ENCODE measurements at regions of chr1 and their contacts with region 1.

Region 1: DNA sequence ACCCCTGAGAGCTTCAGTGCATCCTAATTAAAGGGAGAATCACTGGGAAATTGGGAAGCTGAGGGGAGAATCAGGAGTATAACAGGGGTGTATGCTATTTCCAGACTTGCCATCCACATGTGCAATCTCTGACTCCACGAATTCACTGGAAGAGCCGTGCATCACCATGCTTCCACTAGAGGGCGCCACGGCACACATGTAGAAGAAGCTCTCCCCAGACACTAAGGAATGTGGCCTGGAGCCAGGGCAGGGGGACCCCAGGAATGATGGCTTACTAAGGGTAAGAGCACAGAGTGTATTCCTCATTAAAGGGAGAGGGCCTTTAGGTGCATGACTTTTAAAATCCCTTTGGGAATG is 81.5 kb downstream of the ABCA4 start:
- DNase-seq: peak in 7 of 9 donors; percentile 10 to 57 (median 29)
- ATAC-seq: peak; percentile 37
- H3K4me3 ChIP-seq: no peak overlapping the region
- H3K4me3 Mint-ChIP-seq: no peak overlapping the region
- H3K27ac ChIP-seq: no peak overlapping the region
- H3K27ac Mint-ChIP-seq: peak overlapping the region in 1 of 9 donors; percentile 1
- H3K4me1 ChIP-seq: no peaks in the 10 kb centered on the region
- H3K4me1 Mint-ChIP-seq: peaks cover 0 to 14% (median 0%) of the 10 kb centered on the region in 7 donors
- H3K27me3 ChIP-seq: no peaks in the 10 kb centered on the region
- H3K27me3 Mint-ChIP-seq: peaks cover 20 to 49% (median 30%) of the 10 kb centered on the region in 5 donors

Region 2: GRCh38 chr1:94025383-94026340 is 13.8 kb before region 1 on chr1:
- CTCF ChIA-PET with region 1: interaction called, 14 read pairs
- POLR2A ChIA-PET with region 1: no interaction called
- intact Hi-C with region 1: no loop called
- DNase-seq: peak in 5 of 9 donors; percentile 5 to 19 (median 11)
- ATAC-seq: no peak
- H3K4me3 ChIP-seq: no peak overlapping the region
- H3K4me3 Mint-ChIP-seq: no peak overlapping the region
- H3K27ac ChIP-seq: no peak overlapping the region
- H3K27ac Mint-ChIP-seq: no peak overlapping the region
- H3K4me1 ChIP-seq: no peaks in the 10 kb centered on the region
- H3K4me1 Mint-ChIP-seq: peaks cover 0 to 12% (median 0%) of the 10 kb centered on the region in 7 donors
- H3K27me3 ChIP-seq: peaks cover 0 to 4% of the 10 kb centered on the region in 2 donors
- H3K27me3 Mint-ChIP-seq: peaks cover 6 to 8% (median 7%) of the 10 kb centered on the region in 5 donors

Region 3: DNA sequence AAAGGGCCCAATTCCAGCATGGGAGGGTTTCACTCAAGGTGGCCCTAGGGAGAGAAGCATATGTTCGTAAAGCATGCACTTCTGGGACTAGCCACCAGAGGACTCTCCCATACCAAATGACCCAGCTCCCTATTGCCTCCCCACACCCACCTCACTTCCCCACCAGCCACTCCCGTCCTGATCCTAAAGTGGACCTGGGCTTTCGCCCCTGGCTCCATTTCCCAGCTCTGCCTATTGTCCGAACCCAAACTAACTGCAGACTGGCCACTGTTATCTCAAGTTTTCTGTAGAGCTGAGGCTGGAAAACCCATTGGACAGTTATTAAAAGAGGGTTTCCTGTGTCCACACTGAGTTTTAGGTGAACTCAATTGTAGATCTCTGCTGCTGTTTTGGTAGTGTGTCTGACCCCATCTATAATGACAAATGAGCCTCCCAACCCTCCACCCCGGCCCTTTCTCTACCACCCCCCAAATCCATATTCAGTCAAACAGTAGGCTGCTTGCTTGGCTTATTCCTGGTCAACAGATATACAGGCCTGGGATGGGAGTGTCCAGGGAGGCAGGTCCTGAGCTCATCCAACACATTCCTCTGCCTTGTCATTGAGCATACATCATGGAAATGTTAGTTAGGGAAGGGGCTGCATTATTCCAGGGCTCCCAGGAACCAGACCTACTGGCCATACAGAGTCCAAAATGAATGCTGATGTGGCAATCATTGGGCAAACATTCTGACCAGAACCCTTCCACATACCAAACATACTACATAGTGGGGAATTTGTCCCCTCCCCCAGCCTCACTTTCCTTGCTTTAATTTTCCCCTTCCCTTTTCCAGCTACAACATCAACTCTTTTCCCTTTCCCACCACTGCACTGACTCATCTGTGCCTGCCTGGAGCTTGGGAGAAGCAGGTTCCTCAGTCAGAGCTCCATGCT is 22.3 kb after region 1 on chr1:
- CTCF ChIA-PET with region 1: no interaction called
- POLR2A ChIA-PET with region 1: no interaction called
- intact Hi-C with region 1: no loop called
- DNase-seq: peak in 5 of 9 donors; percentile 11 to 31 (median 17)
- ATAC-seq: peak; percentile 78
- H3K4me3 ChIP-seq: no peak overlapping the region
- H3K4me3 Mint-ChIP-seq: no peak overlapping the region
- H3K27ac ChIP-seq: no peak overlapping the region
- H3K27ac Mint-ChIP-seq: no peak overlapping the region
- H3K4me1 ChIP-seq: no peaks in the 10 kb centered on the region
- H3K4me1 Mint-ChIP-seq: peaks cover 0 to 2% (median 0%) of the 10 kb centered on the region in 7 donors
- H3K27me3 ChIP-seq: no peaks in the 10 kb centered on the region
- H3K27me3 Mint-ChIP-seq: peaks cover 7 to 25% (median 14%) of the 10 kb centered on the region in 5 donors

Region 4: GRCh38 chr1:94316836-94317789 is 277.6 kb after region 1 on chr1:
- CTCF ChIA-PET with region 1: no interaction called
- POLR2A ChIA-PET with region 1: no interaction called
- intact Hi-C with region 1: no loop called
- DNase-seq: no peak
- ATAC-seq: no peak
- H3K4me3 ChIP-seq: no peak overlapping the region
- H3K4me3 Mint-ChIP-seq: no peak overlapping the region
- H3K27ac ChIP-seq: no peak overlapping the region
- H3K27ac Mint-ChIP-seq: no peak overlapping the region
- H3K4me1 ChIP-seq: no peaks in the 10 kb centered on the region
- H3K4me1 Mint-ChIP-seq: no peaks in the 10 kb centered on the region
- H3K27me3 ChIP-seq: no peaks in the 10 kb centered on the region
- H3K27me3 Mint-ChIP-seq: peaks cover 1 to 17% (median 11%) of the 10 kb centered on the region in 5 donors

Measured in naive thymus-derived CD4-positive, alpha-beta T cell (primary cell).